ENCODE measurements at regions of chr7 and their contacts with region 1.

Region 1: DNA sequence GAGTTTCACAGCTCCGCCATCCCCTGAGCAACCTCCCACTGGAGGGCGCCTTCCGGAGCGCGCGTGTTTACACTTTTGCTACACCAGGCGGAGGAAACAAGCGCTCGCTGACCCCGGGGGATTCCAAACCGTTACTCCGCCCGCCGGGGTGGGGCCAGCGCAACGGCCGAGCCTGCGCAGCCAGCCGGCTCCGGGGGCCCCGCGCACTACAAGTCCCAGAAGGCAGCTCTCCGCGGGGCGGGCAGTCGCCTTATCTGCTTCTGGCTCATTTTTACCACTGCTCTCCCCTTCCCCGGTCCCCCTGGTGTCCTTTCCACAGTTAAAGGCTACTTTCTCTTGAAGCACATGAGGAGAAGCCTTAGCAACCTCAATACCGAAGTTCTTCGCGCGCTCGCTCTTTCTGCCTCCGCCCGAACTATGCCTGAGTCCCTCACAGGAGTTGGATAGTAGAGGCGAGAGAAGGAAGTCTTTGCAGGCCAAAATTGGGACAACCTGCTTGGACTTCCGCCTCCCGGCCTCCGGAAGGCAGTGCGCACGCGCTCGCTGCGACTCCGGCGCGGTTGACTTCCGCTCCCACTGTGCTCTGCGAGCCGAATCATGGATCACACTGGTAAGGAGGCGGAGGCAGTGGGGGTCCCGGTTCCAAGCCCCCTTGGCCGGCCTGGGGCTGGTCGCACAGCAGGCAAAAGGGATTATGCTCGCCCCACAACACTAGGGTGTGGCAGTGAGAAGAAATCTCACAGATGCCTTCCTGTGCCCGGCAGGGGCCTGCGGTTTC is at the start of gene CBLL1:
- DNase-seq: peak; percentile 96 to 98
- H3K4me3 ChIP-seq: peak within 1 kb of the TSS; percentile 65 to 80
- H3K27ac ChIP-seq: peak within 1 kb of the TSS; percentile 86 to 96
- H3K4me1 ChIP-seq: peaks cover 0 to 43% (median 18%) of the 10 kb centered on the region in 4 donors
- H3K27me3 ChIP-seq: no peaks in the 10 kb centered on the region
- CTCF ChIP-seq: peak; percentile 58 to 59

Region 2: DNA sequence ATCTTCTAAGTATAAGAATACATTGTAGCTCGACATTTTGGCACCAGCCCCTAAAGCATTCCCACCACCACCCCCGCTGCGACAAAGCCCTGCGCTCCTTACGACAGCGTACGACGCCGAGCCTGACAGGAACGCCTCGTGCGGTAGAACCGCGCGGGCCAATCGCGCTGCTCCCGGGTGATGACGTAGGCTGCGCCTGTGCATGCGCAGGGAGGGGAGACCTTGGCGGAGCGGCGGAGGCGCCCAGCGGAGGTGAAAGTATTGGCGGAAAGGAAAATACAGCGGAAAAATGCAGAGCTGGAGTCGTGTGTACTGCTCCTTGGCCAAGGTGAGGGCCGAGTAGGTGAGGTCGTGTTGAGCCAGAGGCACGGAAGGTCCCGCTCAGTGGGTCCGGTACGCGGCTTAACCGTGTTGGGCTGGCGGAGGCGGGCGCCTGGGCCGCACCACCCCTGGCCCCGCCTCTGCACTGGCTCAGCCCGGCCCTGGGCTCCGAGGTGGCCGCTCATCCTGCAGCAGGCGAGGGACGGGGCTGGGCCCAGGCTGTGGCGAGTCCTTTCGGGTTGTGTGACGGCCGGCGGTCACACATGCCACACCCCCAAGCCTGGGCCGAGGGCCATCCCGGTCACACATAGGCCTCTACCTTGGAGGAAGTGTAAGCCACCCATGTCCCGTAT is 147.3 kb after region 1 on chr7 and contains the start of gene DLD:
- intact Hi-C with region 1: loop called (anchors 10 kb)
- DNase-seq: peak; percentile 93 to 96
- H3K4me3 ChIP-seq: peak within 1 kb of the TSS; percentile 66 to 72
- H3K27ac ChIP-seq: peak within 1 kb of the TSS; percentile 88 to 93
- H3K4me1 ChIP-seq: peaks cover 0 to 33% (median 16%) of the 10 kb centered on the region in 4 donors
- H3K27me3 ChIP-seq: no peaks in the 10 kb centered on the region
- CTCF ChIP-seq: peak in 1 of 2 experiments; percentile 18

Region 3: DNA sequence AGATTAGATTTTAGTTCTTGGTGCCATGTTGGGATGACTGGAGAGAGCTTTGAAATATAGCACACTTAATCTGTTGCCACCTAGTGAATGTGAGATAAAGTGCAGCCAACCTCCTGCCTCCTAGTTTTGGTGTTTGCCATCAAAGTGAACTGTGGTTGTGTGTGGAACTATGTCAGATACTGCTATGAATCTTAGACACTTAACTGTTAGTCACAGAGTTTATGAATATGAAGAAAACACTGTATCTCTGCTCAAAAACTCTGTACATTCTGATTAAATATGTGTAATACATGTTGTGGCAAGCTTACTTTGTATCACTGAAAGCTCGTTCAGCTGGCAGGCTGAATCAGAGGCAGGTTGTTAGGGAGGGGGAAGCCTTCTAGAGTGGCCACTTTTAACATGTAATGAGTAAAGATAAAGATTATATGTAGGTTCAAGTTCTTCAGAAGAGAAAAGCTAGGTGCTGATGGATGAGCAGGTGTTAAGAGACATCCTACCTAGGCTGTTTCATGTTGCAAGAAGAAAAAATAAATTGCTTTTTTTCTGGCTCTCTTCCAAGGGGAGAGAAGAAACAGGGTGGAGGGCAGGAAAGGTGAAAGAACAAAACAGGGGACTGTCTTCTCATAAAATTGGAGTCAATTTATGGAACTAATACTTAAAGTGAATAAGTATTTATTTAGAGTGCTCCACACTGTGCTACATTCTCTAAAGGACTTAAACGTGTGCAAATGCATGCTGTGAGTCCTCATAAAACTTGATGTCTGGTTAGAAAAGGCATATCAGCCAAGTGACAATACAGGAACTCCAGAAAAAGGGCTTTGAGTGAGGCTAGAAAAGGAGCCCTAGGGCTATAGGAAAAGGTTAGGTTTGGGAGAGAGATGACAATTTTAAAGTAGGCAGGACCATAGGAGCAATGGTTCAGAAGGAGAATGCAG is 273.4 kb after region 1 on chr7:
- intact Hi-C with region 1: no loop called
- DNase-seq: no peak
- H3K4me3 ChIP-seq: no peak overlapping the region
- H3K27ac ChIP-seq: no peak overlapping the region
- H3K4me1 ChIP-seq: no peaks in the 10 kb centered on the region
- H3K27me3 ChIP-seq: no peaks in the 10 kb centered on the region
- CTCF ChIP-seq: peak; percentile 35 to 40

Measured in tibial artery (tissue), 4 donors.